ENCODE measurements at regions of chrX and their contacts with region 1.

Region 1: DNA sequence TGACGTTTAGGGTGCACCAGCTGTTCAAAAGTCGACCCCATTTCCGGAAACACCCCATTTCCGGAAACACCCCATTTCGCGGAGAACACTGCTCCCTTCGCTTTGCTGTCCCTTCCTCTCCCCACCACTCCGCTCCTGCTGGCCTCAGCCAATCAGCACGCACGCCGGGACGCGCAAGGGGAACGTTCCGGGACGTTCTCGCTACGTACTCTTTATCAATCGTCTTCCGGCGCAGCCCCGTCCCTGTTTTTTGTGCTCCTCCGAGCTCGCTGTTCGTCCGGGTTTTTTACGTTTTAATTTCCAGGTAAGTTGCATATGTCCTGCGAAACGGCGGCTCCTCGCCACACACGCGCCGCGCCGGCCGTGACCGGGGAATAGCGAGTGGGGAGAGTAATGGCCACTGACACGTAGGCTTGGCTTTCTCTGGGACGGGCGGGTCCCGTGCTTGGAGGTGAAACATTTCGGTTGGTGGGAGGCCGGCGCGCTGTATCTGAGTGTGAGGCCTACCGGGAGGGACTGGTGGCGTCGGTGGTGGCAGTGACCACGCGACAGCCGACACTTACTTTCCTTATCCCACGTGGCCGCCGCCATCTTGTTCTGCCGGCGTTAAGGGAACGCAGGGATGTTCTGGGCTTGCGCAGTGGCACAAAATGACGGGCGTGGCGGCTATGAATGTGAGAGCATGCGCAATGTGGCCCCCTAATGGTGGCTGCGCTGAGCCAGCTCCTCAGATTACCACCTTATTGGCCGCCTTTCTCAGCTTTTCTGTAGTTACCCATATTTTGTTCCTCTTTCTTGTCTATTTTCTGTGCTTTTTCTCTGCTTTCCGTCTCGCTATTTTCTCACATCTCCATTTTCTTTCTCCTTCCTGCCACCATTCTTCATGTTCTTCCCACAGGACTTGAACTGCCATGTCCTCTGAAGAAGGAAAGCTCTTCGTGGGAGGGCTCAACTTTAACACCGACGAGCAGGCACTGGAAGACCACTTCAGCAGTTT is at the start of gene RBM3:
- DNase-seq: peak; percentile 95
- H3K4me3 Mint-ChIP-seq: peak within 1 kb of the TSS; percentile 92
- H3K27ac Mint-ChIP-seq: peak within 1 kb of the TSS; percentile 90
- H3K4me1 Mint-ChIP-seq: peaks cover 17% of the 10 kb centered on the region
- H3K27me3 Mint-ChIP-seq: no peaks in the 10 kb centered on the region
- total RNA-seq, gene RBM3: 191 to 197 TPM

Region 2: GRCh38 chrX:48475774-48476577 is 98.6 kb before region 1 on chrX and contains the start of gene FTSJ1:
- CTCF ChIA-PET with region 1: interaction called, 3 read pairs
- POLR2A ChIA-PET with region 1: interaction called, 3 read pairs
- intact Hi-C with region 1: loop called (anchors 1 kb)
- DNase-seq: peak; percentile 90
- H3K4me3 Mint-ChIP-seq: peak within 1 kb of the TSS; percentile 94
- H3K27ac Mint-ChIP-seq: peak within 1 kb of the TSS; percentile 93
- H3K4me1 Mint-ChIP-seq: peaks cover 33% of the 10 kb centered on the region
- H3K27me3 Mint-ChIP-seq: no peaks in the 10 kb centered on the region
- total RNA-seq, gene FTSJ1: 62.8 to 73.9 TPM

Region 3: DNA sequence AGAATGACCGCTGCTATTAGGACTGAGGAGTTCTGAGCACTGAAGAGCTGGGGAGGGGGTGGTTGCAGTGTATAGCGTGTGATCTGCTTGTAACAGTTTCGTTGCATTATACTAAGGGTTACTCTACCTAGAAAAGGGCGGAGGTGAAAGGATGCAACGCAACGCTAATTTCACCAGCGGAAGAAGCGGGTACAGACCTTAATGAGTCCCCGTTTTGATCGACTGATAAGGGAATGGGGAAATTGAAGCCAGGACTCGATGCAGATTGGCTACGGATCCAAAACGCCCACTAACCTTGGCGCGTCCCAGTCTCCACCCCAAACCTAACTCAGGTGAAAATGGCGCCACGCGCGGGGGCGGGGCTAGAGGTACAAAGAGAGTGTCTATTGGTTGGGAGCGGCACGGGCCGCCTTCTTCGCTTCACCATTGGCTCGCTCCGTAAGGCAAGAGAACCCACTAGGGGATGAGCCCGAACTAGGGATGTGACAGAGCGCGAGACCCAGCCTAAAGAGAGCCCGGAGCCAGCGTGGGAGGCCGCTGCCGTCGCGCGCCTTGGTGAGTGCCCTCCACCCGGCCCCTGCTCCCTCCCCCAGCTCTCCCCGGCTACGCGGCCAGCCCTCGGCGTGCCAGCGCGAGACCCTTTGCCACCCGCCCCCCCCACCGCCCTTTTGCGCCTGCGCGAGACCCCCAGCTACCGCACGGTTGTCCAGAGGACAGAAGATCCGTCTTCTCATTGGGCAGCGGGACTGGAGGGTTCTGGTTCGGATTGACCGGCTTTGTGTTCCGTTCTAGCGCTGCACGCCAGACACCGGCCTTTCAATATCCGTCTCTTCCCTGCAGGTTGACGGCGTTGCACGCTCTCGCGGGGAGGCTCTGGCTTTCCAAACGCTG is 53.0 kb before region 1 on chrX and contains the start of gene EBP:
- CTCF ChIA-PET with region 1: no interaction called
- POLR2A ChIA-PET with region 1: interaction called, 3 read pairs
- intact Hi-C with region 1: loop called (anchors 1 kb)
- DNase-seq: peak; percentile 97
- H3K4me3 Mint-ChIP-seq: peak within 1 kb of the TSS; percentile 92
- H3K27ac Mint-ChIP-seq: peak within 1 kb of the TSS; percentile 98
- H3K4me1 Mint-ChIP-seq: peaks cover 27% of the 10 kb centered on the region
- H3K27me3 Mint-ChIP-seq: no peaks in the 10 kb centered on the region
- total RNA-seq, gene EBP: 149 to 150 TPM

Region 4: DNA sequence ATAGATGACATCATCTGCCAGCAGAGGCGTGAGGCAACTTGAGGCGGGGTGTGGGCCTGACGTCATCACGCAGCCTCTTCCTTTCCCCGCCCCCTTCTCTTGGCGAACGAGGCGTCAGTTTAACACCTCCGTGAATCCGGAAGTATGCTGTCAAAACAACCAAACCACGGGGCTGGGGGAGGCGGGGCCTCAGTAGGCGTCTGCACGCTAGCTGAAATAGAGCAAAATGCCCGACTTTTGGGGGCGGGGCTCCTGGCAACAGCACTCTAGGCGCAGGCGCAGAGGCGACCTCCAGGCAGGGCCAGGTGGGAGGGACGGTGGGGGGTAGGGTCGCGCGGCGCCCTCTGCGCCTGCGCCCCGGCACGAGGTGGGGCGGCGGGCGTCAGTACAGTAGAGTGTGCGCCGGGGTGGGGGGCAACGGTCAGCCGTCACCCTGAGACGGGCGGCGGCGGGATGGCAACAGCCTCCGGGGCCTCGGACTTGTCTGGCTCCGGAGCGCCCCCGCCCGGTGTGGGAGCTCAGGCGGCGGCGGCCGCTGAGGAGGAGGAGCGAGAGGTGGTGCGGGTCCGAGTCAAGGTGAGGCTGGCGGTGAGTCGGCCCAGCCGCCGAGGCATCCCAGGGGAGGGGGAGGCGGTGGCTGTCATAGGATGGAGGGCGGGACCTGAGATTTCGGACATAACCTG is 35.1 kb before region 1 on chrX and contains the start of gene TBC1D25:
- CTCF ChIA-PET with region 1: no interaction called
- POLR2A ChIA-PET with region 1: interaction called, 12 read pairs
- intact Hi-C with region 1: loop called (anchors 1 kb)
- DNase-seq: peak; percentile 98
- H3K4me3 Mint-ChIP-seq: peak within 1 kb of the TSS; percentile 84
- H3K27ac Mint-ChIP-seq: peak within 1 kb of the TSS; percentile 97
- H3K4me1 Mint-ChIP-seq: peaks cover 19% of the 10 kb centered on the region
- H3K27me3 Mint-ChIP-seq: no peaks in the 10 kb centered on the region
- total RNA-seq, gene TBC1D25: 13.5 to 16.2 TPM

Region 5: DNA sequence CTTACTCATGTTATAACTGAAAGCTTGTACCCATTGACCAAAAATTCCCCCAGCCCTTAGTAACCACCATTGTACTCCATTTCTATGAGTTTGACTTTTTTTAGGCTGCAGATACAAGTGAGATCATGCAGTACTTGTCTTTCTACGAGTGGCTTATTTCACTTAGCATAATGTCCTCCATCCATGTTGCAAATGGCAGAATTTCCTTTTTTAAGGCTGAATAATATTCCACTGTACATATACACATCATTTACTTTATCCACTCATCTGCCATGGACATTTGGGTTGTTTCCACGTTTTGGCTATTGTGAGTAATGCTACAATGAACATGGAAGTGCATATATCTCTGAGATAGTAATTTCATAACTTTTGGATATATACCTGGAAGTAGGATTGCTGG is 10.1 kb after region 1 on chrX:
- CTCF ChIA-PET with region 1: no interaction called
- POLR2A ChIA-PET with region 1: no interaction called
- intact Hi-C with region 1: no loop called
- DNase-seq: no peak
- H3K4me3 Mint-ChIP-seq: no peak overlapping the region
- H3K27ac Mint-ChIP-seq: no peak overlapping the region
- H3K4me1 Mint-ChIP-seq: peaks cover 3% of the 10 kb centered on the region
- H3K27me3 Mint-ChIP-seq: no peaks in the 10 kb centered on the region

Region 6: DNA sequence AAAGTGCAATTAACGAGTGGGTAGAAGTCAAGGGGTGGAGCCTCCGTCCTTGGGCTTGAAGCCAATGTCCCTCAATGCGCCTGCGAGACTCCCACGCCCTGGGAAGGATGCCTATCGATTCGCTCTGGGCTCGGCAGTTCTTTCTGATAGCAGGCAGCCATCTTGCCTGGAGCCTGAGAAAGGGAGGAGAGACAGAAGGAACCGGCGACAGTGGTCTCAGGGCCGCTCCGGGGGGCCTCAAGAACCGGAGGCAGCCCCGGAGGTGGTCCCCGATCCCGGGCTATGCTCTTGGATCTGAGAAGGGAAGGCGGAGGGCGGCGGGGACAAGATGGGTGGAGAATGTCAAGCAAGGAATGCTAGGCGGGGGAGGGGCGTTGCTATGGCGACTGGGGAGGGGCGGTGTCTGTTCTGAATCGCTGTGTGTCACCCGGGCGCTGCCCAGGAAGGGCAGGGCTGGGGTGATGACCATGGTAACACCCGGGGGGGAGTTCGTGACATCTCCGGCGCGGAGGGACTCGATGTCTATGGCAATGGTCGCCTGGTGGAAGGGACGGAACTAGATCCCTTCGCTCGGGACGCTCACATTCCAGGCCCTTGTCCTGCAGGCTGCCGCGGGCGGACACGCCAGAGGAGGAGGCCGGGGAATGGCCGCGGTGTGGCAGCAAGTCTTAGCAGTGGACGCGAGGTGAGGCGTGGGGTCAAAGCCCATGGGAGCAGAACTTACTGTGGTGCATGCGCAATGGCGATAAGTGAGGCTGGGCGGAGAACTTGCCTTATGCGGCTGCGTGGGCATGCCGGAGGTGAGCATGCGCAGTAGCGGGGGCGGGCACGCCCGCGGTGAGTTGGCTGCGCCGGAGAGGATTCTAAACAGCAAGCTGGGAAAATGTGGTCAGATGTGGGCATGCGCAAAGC is 23.0 kb after region 1 on chrX and contains the start of gene WDR13:
- CTCF ChIA-PET with region 1: interaction called, 3 read pairs
- POLR2A ChIA-PET with region 1: no interaction called
- intact Hi-C with region 1: loop called (anchors 1 kb)
- DNase-seq: peak; percentile 93
- H3K4me3 Mint-ChIP-seq: peak within 1 kb of the TSS; percentile 96
- H3K27ac Mint-ChIP-seq: peak within 1 kb of the TSS; percentile 99
- H3K4me1 Mint-ChIP-seq: peaks cover 8% of the 10 kb centered on the region
- H3K27me3 Mint-ChIP-seq: no peaks in the 10 kb centered on the region
- total RNA-seq, gene WDR13: 45.8 to 54.8 TPM

Region 7: GRCh38 chrX:48631350-48632090 is 57.0 kb after region 1 on chrX:
- CTCF ChIA-PET with region 1: no interaction called
- POLR2A ChIA-PET with region 1: no interaction called
- intact Hi-C with region 1: no loop called
- DNase-seq: peak; percentile 80
- H3K4me3 Mint-ChIP-seq: peak overlapping the region; percentile 35
- H3K27ac Mint-ChIP-seq: no peak overlapping the region
- H3K4me1 Mint-ChIP-seq: peaks cover 11% of the 10 kb centered on the region
- H3K27me3 Mint-ChIP-seq: no peaks in the 10 kb centered on the region

Region 8: DNA sequence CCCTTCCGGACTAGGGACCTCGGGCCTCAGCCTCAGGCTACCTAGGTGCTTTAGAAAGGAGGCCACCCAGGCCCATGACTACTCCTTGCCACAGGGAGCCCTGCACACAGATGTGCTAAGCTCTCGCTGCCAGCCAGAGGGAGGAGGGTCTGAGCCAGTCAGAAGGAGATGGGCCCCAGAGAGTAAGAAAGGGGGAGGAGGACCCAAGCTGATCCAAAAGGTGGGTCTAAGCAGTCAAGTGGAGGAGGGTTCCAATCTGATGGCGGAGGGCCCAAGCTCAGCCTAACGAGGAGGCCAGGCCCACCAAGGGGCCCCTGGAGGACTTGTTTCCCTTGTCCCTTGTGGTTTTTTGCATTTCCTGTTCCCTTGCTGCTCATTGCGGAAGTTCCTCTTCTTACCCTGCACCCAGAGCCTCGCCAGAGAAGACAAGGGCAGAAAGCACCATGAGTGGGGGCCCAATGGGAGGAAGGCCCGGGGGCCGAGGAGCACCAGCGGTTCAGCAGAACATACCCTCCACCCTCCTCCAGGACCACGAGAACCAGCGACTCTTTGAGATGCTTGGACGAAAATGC is 108.9 kb after region 1 on chrX and contains the start of gene WAS:
- CTCF ChIA-PET with region 1: no interaction called
- POLR2A ChIA-PET with region 1: no interaction called
- intact Hi-C with region 1: loop called (anchors 10 kb)
- DNase-seq: peak; percentile 67
- H3K4me3 Mint-ChIP-seq: peak within 1 kb of the TSS; percentile 92
- H3K27ac Mint-ChIP-seq: peak within 1 kb of the TSS; percentile 97
- H3K4me1 Mint-ChIP-seq: peaks cover 55% of the 10 kb centered on the region
- H3K27me3 Mint-ChIP-seq: no peaks in the 10 kb centered on the region
- total RNA-seq, gene WAS: 95.2 to 99.6 TPM

Region 9: DNA sequence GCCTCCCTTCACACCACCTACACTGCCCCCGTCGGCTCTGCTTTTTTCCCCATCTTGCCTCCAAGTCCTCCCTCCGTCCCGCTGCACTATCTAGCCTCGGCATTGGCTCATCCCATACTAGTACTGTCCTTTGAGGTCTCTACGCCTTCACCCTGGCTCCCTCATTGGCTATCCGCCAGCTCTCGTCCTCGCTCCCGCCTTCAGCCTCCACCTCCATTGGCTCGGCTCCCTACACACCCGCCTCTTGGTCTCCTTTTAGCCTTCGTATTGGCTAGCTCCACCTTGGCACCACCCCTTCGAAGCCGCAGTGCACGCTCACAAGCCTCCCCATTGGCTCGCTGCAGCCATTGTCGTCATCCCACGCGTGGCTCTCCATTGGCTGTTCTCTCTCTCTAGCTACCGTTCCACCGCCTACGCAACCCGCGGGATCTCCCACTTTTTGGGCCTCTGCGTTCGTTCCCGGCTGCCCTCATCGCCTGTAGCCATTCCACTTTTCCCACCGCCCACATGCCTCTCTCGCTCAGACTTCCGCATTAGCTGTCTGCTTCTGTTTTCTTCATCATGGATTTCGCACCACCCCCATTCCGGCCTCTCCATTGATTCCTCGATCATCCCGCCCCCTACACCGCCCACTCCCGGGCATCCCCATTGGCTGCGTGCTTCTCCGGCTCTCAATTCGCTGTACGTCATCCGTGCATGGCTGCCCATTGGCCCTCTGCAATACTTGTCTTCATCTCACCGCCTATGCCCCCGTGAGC is 694.6 kb after region 1 on chrX:
- CTCF ChIA-PET with region 1: no interaction called
- POLR2A ChIA-PET with region 1: no interaction called
- intact Hi-C with region 1: loop called (anchors 10 kb)
- DNase-seq: peak; percentile 97
- H3K4me3 Mint-ChIP-seq: peak overlapping the region; percentile 91
- H3K27ac Mint-ChIP-seq: peak overlapping the region; percentile 98
- H3K4me1 Mint-ChIP-seq: peaks cover 56% of the 10 kb centered on the region
- H3K27me3 Mint-ChIP-seq: no peaks in the 10 kb centered on the region